Activated CD4-positive, alpha-beta memory T cell treated with anti-CD3 and anti-CD28 coated beads for 36 hours (primary cell): ENCODE measurements at regions of chr4 and their contacts with region 1.

Region 1: GRCh38 chr4:112636688-112637551 is at the starts of genes LARP7 and ZGRF1:
- DNase-seq: peak; percentile 99
- H3K4me3 Mint-ChIP-seq: no peak within 1 kb of the TSS
- H3K27ac Mint-ChIP-seq: no peak within 1 kb of the TSS
- H3K4me1 Mint-ChIP-seq: peaks cover 33% of the 10 kb centered on the region
- H3K27me3 Mint-ChIP-seq: no peaks in the 10 kb centered on the region
- total RNA-seq, gene LARP7: 40.9 to 41.3 TPM
- total RNA-seq, gene ZGRF1: 32.9 to 36.6 TPM

Region 2: GRCh38 chr4:112231779-112232713 is 404.9 kb before region 1 on chr4 and contains the start of gene AP1AR:
- CTCF ChIA-PET with region 1: no interaction called
- POLR2A ChIA-PET with region 1: no interaction called
- intact Hi-C with region 1: loop called (anchors 1 kb)
- DNase-seq: peak; percentile 87
- H3K4me3 Mint-ChIP-seq: peak within 1 kb of the TSS; percentile 87
- H3K27ac Mint-ChIP-seq: peak within 1 kb of the TSS; percentile 98
- H3K4me1 Mint-ChIP-seq: peaks cover 34% of the 10 kb centered on the region
- H3K27me3 Mint-ChIP-seq: no peaks in the 10 kb centered on the region
- total RNA-seq, gene AP1AR: 15.4 to 19.1 TPM

Region 3: DNA sequence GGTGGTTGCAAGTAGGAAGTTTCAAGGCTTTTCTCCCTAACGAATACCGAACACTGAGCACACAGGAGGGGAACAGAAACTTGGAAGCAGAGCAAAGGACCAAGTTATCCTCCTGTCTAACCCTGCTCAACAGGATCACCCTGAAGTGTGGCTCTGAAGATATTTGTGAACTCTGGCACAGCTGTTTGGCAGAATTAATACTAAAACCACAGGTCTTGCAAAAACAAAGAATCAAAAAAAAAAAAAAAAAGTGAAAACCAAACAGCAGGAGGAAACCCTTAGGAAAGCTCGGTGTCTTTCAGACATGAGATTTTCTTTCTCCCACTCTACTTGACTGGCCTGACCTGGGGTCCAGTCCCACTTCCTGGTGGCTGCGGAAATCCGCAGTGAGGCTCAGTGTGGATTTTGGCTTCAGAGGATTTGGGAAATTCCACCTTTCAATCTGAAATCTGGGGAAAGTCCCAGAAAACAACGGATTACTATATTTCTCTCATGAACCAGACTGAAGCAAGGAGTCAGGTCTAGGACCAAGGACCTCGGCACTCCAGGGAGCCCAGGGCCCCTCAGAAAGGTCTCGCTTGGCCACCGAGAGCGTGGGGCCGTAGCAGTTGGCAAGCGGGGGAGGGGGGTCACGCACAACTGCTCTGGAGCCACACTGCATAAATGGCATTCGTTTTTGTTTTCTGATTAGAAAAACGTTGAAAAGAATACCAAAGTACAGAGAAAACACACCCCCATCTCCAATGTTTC is 352.1 kb before region 1 on chr4:
- CTCF ChIA-PET with region 1: no interaction called
- POLR2A ChIA-PET with region 1: no interaction called
- intact Hi-C with region 1: loop called (anchors 2 kb)
- DNase-seq: peak; percentile 39
- H3K4me3 Mint-ChIP-seq: peak overlapping the region; percentile 94
- H3K27ac Mint-ChIP-seq: peak overlapping the region; percentile 97
- H3K4me1 Mint-ChIP-seq: peaks cover 69% of the 10 kb centered on the region
- H3K27me3 Mint-ChIP-seq: no peaks in the 10 kb centered on the region

Region 4: DNA sequence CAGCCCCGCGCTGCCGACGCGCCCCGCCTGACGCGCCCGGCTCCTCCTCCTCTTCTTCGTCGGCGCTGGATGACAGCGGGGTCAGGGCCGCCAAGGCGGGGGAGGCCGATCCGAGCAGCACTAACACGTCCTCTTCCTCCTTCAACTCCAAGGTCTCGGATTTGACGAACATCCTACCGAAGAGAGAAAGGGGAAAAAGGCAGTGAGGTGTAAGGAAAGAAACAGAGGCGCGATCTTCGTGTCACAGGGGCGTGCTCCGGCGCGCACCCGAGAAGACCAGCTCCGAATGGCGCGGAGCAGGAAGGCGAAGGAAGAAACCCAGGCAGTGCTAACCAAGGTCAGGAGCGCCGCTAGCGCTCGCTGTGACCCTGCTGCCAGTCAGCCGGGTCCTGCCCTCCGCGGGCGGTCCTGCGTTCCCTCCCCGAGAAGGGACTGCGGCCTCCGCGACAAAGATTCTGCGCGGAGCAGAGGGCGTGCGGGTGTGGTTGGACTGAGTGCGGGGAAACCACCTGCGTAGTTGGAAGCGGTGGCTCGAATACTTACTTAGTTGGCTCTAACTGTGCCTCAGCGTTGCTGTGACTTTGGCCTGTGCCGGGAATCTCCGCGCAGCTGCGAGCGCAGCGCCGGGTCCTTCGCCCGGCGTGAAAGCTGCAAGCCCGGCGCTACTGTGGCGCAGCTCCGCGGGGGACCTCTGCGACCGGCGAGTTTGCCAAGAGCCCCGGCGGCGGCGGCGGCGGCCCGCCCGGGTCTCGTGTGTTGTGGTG is 121.4 kb before region 1 on chr4:
- CTCF ChIA-PET with region 1: no interaction called
- POLR2A ChIA-PET with region 1: no interaction called
- intact Hi-C with region 1: loop called (anchors 2 kb)
- DNase-seq: peak; percentile 67
- H3K4me3 Mint-ChIP-seq: peak overlapping the region; percentile 94
- H3K27ac Mint-ChIP-seq: no peak overlapping the region
- H3K4me1 Mint-ChIP-seq: peaks cover 42% of the 10 kb centered on the region
- H3K27me3 Mint-ChIP-seq: peaks cover 85% of the 10 kb centered on the region

Region 5: DNA sequence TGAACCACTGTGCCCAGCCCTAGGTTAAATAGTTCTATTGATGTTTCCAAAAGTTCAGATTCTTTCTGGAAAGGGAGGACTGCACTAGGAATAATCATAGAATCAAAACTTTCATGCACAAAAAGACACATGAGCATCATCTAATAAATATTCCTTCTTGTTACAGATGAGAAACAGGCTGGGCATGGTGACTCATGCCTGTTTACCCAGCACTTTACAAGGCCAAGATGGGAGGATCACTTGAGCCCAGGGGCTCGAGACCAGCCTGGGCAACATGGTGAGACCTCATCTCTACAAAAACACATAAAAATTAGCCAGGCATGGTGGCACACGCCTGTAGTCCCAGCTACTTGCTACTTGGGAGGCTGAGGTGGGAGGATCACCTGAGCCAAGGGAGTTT is 27.7 kb after region 1 on chr4:
- CTCF ChIA-PET with region 1: no interaction called
- POLR2A ChIA-PET with region 1: no interaction called
- intact Hi-C with region 1: no loop called
- DNase-seq: no peak
- H3K4me3 Mint-ChIP-seq: no peak overlapping the region
- H3K27ac Mint-ChIP-seq: no peak overlapping the region
- H3K4me1 Mint-ChIP-seq: no peaks in the 10 kb centered on the region
- H3K27me3 Mint-ChIP-seq: no peaks in the 10 kb centered on the region

Region 6: GRCh38 chr4:112714922-112715901 is 78.3 kb after region 1 on chr4:
- CTCF ChIA-PET with region 1: no interaction called
- POLR2A ChIA-PET with region 1: no interaction called
- intact Hi-C with region 1: no loop called
- DNase-seq: no peak
- H3K4me3 Mint-ChIP-seq: no peak overlapping the region
- H3K27ac Mint-ChIP-seq: no peak overlapping the region
- H3K4me1 Mint-ChIP-seq: no peaks in the 10 kb centered on the region
- H3K27me3 Mint-ChIP-seq: peaks cover 8% of the 10 kb centered on the region

Region 7: GRCh38 chr4:112735474-112735951 is 98.6 kb after region 1 on chr4:
- CTCF ChIA-PET with region 1: no interaction called
- POLR2A ChIA-PET with region 1: no interaction called
- intact Hi-C with region 1: loop called (anchors 1 kb)
- DNase-seq: no peak
- H3K4me3 Mint-ChIP-seq: no peak overlapping the region
- H3K27ac Mint-ChIP-seq: no peak overlapping the region
- H3K4me1 Mint-ChIP-seq: peaks cover 16% of the 10 kb centered on the region
- H3K27me3 Mint-ChIP-seq: no peaks in the 10 kb centered on the region

Region 8: GRCh38 chr4:112817933-112818593 is 181.1 kb after region 1 on chr4:
- CTCF ChIA-PET with region 1: no interaction called
- POLR2A ChIA-PET with region 1: no interaction called
- intact Hi-C with region 1: loop called (anchors 1 kb)
- DNase-seq: peak; percentile 77
- H3K4me3 Mint-ChIP-seq: peak overlapping the region; percentile 75
- H3K27ac Mint-ChIP-seq: no peak overlapping the region
- H3K4me1 Mint-ChIP-seq: peaks cover 10% of the 10 kb centered on the region
- H3K27me3 Mint-ChIP-seq: peaks cover 29% of the 10 kb centered on the region

Region 9: GRCh38 chr4:113355550-113356371 is 718.8 kb after region 1 on chr4:
- CTCF ChIA-PET with region 1: no interaction called
- POLR2A ChIA-PET with region 1: no interaction called
- intact Hi-C with region 1: loop called (anchors 1 kb)
- DNase-seq: peak; percentile 88
- H3K4me3 Mint-ChIP-seq: peak overlapping the region; percentile 36
- H3K27ac Mint-ChIP-seq: peak overlapping the region; percentile 92
- H3K4me1 Mint-ChIP-seq: peaks cover 39% of the 10 kb centered on the region
- H3K27me3 Mint-ChIP-seq: peaks cover 45% of the 10 kb centered on the region